Activated naive CD4-positive, alpha-beta T cell treated with anti-CD3 and anti-CD28 coated beads for 36 hours (primary cell): ENCODE measurements at regions of chr17 and their contacts with region 1.

Region 1: DNA sequence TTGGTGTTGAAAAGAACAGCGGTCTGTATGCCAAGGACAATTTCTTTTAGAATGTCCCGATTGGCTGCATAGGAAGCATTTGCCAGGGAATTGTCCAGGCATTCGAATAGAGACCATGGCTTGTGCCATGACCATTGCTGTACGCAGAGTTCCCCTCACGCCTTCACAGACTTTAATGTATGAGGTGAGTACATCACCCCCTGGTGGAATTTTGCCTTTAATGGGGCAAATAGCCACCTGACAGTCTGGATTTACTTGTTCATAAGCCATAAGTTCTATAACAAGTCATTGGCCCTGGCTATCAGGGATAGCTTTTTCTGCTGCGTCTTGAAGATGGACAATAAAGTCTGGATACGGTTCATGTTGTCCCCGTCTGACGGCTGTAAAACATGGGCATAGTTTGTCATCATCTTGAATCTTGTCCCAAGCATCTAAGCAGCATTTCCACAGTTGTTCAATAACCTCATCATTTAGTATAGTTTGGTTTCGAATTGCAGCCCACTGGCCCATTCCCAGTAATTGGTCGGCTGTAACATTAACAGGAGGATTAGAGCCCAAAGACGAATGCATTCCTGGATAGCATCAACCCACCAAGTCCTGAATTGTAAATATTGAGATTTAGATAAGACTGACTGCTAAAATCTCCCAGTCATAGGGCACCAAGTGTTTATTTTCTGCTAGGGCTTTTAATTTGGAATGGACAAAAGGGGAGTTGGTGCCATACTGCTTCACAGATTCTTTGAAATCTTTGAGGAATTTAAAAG is 67.7 kb upstream of the ARL4D start:
- DNase-seq: no peak
- H3K4me3 Mint-ChIP-seq: no peak overlapping the region
- H3K27ac Mint-ChIP-seq: no peak overlapping the region
- H3K4me1 Mint-ChIP-seq: peaks cover 18% of the 10 kb centered on the region
- H3K27me3 Mint-ChIP-seq: peaks cover 23% of the 10 kb centered on the region

Region 2: DNA sequence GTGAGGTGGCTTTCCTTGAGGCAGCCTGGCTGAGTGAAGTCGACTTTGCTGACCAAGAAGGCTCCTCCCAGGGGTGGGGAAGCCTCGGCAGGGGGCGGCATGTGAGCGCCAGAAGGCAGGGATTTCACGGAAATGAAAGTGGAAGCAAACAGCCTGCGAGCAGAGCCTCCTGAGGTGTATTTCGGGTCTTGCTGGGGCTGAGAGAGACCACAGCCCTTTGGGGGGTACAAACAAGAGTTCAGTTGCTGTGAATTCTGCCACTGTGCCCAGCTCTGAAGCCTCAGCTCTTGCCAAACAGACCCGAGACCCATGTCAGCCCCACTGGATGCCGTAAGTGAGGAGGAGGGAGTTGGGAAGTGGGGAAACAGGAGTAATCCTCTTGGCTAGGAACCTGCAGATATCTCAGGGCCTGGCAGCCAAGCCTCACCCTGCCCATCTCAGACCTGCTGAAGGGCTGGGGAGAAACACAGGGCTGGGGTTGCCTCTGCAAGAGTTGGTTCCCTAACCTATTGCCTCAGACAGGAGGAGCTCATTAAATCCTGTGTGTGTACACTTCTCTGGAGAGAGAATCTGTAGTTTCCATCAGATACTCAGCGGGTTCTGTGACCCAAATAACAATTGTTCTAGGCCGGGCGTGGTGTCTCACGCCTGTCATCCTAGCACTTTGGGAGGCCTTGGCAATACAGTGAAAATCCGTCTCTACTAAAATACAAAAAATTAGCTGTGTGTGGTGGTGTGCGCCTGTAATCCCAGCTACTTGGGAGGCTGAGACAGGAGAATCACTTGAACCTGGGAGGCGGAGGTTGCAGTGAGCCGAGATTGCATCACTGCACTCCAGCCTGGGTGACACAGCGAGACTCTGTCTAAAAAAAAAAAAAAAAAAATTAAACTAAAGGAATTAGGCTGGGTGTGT is 324.2 kb before region 1 on chr17 and contains the start of gene IFI35:
- CTCF ChIA-PET with region 1: no interaction called
- intact Hi-C with region 1: loop called (anchors 5 kb)
- DNase-seq: peak; percentile 94
- H3K4me3 Mint-ChIP-seq: peak within 1 kb of the TSS; percentile 100
- H3K27ac Mint-ChIP-seq: peak within 1 kb of the TSS; percentile 99
- H3K4me1 Mint-ChIP-seq: peaks cover 16% of the 10 kb centered on the region
- H3K27me3 Mint-ChIP-seq: no peaks in the 10 kb centered on the region
- total RNA-seq, gene IFI35: 43.9 to 50.5 TPM

Region 3: DNA sequence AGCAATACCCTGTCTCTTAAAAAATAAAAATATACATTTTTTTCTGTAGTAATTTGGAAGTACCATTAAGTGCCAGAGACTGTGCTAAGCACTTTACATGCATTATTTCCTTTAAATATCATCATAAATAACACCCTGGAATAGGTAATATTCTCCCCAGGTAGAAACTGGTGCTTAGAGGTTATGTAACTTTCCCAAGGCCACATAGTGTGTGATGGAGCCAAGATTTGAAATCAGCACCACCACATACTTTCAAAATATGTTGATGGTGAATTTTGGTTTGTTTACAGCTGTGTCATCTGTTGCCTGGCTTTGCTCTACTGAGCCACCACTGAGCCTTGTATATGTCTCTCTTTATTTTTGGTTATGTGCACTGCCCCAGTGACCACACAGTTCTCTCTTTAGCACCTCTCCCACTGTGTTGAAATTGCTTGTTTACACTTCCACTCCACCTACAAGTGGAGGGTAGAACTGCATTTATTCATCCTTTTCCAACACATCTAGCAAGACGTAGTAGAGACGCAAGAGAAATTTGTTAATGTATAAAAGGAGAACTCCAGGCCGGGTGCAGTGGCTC is 179.1 kb before region 1 on chr17:
- CTCF ChIA-PET with region 1: no interaction called
- intact Hi-C with region 1: no loop called
- DNase-seq: no peak
- H3K4me3 Mint-ChIP-seq: no peak overlapping the region
- H3K27ac Mint-ChIP-seq: no peak overlapping the region
- H3K4me1 Mint-ChIP-seq: no peaks in the 10 kb centered on the region
- H3K27me3 Mint-ChIP-seq: no peaks in the 10 kb centered on the region

Region 4: DNA sequence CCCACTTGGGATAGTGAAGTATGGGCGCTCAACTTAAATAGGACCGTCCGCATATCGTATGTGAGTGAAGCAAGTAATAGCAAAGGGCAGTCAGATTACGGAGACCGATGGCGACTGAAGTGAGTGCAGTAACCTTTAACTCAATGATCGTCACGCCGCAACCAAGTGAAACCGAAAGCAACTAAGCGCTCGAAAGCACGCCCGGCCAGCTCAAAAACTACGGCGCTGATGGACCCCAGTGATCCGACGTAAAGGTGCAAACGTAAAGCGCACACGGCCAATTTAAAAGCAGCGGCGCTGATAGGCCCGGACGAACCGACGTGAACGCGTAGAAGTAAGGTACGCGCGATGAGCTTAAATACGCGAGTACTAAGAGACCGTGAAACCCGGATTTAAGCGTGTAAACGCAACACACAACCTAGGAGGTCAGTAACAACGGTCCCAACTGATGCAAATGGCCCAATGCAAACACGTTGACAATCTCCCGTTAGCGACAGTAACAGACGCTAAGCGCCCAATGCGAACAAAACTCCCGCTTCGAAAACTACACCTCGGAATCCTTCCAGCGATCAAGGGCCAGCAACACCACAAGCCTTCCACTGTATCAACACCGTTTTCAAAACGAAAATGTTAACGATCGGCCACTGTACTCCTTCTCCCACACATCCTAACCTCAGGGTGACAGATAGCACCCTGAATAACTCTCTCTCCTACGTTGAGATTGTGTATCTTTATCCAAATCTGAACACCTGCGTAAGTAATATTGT is 29.9 kb after region 1 on chr17:
- CTCF ChIA-PET with region 1: interaction called, 10 read pairs
- intact Hi-C with region 1: no loop called
- DNase-seq: peak; percentile 91
- H3K4me3 Mint-ChIP-seq: peak overlapping the region; percentile 85
- H3K27ac Mint-ChIP-seq: peak overlapping the region; percentile 100
- H3K4me1 Mint-ChIP-seq: peaks cover 33% of the 10 kb centered on the region
- H3K27me3 Mint-ChIP-seq: peaks cover 8% of the 10 kb centered on the region

Region 5: GRCh38 chr17:43377056-43377810 is 46.2 kb after region 1 on chr17:
- CTCF ChIA-PET with region 1: no interaction called
- intact Hi-C with region 1: no loop called
- DNase-seq: no peak
- H3K4me3 Mint-ChIP-seq: no peak overlapping the region
- H3K27ac Mint-ChIP-seq: no peak overlapping the region
- H3K4me1 Mint-ChIP-seq: peaks cover 2% of the 10 kb centered on the region
- H3K27me3 Mint-ChIP-seq: no peaks in the 10 kb centered on the region

Region 6: DNA sequence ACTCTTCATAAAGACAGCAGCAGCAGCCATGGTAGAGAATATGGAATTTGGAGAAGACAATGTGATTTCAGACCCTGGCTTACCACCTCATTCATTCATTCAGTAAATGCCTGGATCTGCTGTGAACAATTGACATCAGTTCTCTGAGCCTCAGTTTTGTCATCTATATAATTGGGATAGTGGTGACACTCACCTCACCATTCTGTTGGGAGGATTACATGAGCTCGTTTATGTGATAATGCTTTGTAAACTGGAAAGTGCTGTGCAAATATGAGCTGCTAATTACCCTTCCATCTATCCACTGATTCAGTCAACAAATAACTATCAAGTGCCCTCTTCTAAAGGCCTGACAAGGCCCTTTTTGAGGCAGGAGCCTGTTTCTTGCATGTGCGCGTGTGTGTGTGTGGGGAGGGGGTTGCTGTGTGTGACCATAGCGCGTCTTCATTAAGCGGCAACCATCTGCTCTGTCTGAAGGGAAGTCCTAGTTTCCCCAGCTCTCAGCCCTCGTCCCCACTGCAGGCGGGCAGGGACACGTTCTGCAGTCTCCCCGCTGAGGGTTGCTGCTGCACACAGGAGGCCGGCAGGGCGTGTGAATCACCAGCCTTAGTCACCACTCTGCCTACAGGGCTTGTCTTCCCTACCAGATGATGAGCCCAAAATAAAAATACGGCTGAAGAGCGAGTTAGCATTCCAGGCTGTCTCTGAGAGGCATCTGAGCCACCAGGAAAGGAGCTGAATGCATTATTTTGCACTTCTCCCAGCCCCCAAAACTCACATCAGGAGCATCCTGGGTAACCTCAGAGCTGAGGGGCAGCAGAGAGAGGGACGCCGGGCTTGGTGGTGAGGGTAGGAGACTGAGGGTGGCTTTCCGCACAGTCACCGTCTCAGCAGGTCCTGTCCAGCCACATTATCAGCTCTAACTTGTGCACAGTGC is 87.7 kb after region 1 on chr17:
- CTCF ChIA-PET with region 1: no interaction called
- intact Hi-C with region 1: no loop called
- DNase-seq: peak; percentile 18
- H3K4me3 Mint-ChIP-seq: no peak overlapping the region
- H3K27ac Mint-ChIP-seq: no peak overlapping the region
- H3K4me1 Mint-ChIP-seq: no peaks in the 10 kb centered on the region
- H3K27me3 Mint-ChIP-seq: peaks cover 7% of the 10 kb centered on the region